ENCODE measurements at regions of chr1 and their contacts with region 1.

Region 1: DNA sequence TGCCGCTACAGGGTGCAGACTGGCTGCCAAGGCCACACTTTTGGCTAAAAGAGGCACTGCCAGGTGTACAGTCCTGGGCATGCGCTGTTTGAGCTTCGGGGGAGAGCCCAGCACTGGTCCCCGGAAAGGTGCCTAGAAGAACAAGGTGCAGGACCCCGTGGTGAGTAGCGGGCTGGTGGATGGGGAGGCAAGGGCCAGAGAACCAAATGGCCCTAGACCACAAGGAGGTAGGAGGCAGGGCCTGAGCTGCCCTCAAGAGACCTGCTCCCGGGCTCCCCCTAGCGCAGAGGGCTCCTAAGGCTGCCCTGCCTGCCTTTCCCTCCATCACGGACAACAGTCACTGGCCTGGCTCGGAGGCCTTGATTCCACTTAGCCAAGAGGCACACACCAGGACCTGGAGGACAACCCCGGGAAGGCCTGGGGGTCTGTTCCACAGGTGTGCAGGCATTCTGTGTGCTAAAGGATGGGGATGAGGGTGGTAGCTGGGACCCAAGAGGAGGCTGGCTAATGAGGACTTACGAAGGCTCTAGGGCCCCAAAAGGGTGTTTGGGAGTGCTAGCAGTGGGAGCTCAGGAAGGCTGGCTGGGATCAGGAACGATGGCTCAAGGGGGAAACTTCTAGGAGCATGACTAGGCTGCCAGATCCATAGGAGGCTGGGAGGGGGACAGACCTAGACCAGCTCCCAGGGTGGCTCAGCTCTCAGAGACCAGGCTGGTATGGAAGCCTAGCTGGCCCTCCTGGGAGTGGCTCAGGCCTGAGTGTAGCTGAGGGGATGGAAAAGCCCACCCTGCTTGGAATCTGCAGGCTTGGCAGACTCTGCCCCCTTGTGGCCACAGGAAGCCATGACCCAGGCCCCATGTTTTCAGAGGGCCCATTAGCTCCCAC is 742 bp downstream of the ARTN start:
- DNase-seq: peak; percentile 51 to 60
- ATAC-seq: peak; percentile 32 to 76; a peak in 4 of 6 replicates
- H3K4me3 ChIP-seq: no peak overlapping the region
- H3K27ac ChIP-seq: peak overlapping the region in 1 of 2 experiments; percentile 92; a peak in 4 of 6 replicates
- H3K4me1 ChIP-seq: peaks cover 54% of the 10 kb centered on the region
- CTCF ChIP-seq: peak; percentile 63
- EP300 ChIP-seq: no peak
- POLR2A ChIP-seq: no peak
- RAD21 ChIP-seq: peak; percentile 74 to 81

Region 2: GRCh38 chr1:43774359-43774758 is 160.0 kb before region 1 on chr1:
- CTCF ChIA-PET with region 1: interaction called, 22 read pairs
- POLR2A ChIA-PET with region 1: no interaction called
- DNase-seq: no peak
- ATAC-seq: peak in 1 of 2 experiments; percentile 52; a peak in 3 of 6 replicates
- H3K4me3 ChIP-seq: no peak overlapping the region
- H3K27ac ChIP-seq: peak overlapping the region; percentile 21 to 56; a peak in 2 of 6 replicates
- H3K4me1 ChIP-seq: peaks cover 31% of the 10 kb centered on the region
- CTCF ChIP-seq: no peak
- EP300 ChIP-seq: no peak
- POLR2A ChIP-seq: no peak
- RAD21 ChIP-seq: no peak

Region 3: DNA sequence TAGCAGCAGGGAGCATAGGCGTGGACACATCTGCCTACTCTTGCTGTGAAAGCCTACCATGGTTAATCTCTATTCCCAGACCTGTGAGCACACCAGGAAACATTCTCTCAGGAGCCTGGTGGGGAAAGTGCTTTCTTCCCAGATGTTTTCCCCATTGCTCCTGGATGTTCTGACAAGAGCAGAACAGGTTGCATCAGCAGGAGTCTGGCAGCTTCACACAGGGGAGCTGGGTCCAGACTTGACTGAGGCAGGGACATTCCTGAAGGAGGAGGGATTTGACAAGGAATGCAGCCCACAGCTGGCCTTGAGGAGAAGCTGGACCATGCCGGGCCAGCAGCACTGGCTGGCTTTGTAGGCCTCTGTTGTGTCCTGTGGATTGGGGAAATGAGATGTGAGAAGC is 21.7 kb before region 1 on chr1:
- CTCF ChIA-PET with region 1: interaction called, 27 read pairs
- POLR2A ChIA-PET with region 1: no interaction called
- DNase-seq: no peak
- ATAC-seq: no peak
- H3K4me3 ChIP-seq: no peak overlapping the region
- H3K27ac ChIP-seq: peak overlapping the region in 1 of 2 experiments; percentile 46; a peak in 3 of 6 replicates
- H3K4me1 ChIP-seq: peaks cover 6% of the 10 kb centered on the region; the same call in 1 of the 3 replicates
- CTCF ChIP-seq: no peak
- EP300 ChIP-seq: no peak
- POLR2A ChIP-seq: no peak
- RAD21 ChIP-seq: no peak

Region 4: DNA sequence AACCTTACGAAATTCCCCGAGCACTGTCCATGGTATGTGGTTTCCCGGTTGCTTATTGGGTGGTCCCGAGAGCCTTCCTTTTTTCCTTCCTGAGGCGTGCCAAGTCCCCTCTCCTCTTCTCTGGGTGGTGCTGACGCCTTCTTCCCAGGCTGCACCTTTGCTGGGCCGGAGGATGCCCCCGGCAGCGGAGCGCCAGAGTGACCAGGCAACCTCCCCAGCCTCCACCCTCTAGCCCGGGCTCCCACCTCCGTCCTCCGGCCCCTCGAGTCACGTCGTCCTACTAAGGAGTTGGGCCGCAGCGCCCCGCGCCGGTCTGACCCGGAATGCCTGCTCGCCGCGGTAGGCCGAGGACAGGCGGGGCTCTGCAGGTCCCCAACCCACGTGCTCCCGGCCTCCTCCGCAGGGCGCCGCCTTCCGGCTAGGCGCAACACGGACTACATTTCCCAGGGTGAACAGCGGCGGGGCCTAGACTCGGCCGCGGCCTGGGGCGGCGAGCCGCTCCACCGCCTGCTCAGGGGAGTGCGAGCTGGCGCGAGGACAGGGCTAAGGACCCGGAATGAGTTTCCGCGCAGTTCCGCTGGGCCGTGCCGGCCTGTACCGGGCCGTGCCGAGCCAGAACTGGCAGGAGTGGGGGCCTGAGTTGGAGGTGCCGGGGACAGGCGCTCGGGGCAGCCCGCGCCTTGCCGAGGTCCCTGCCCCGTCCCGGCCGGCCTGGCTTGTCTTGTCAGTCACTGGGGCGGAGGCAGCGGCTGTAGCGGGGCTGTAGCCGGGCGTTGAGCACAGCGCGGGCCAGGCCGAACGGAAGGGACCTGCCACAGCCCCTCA is 12.1 kb after region 1 on chr1 and contains the start of gene IPO13:
- CTCF ChIA-PET with region 1: interaction called, 34 read pairs
- POLR2A ChIA-PET with region 1: no interaction called
- DNase-seq: peak; percentile 90 to 96
- ATAC-seq: peak; percentile 97 to 98
- H3K4me3 ChIP-seq: peak within 1 kb of the TSS; percentile 68
- H3K27ac ChIP-seq: peak within 1 kb of the TSS; percentile 94 to 97
- H3K4me1 ChIP-seq: peaks cover 13% of the 10 kb centered on the region; the same call in 1 of the 3 replicates
- CTCF ChIP-seq: peak; percentile 55
- EP300 ChIP-seq: no peak
- POLR2A ChIP-seq: peak; percentile 81
- RAD21 ChIP-seq: peak; percentile 58 to 68; a peak in 4 of 5 replicates
- polyA plus RNA-seq, gene IPO13: 8.1 and 12.9 TPM in 2 replicates

Region 5: DNA sequence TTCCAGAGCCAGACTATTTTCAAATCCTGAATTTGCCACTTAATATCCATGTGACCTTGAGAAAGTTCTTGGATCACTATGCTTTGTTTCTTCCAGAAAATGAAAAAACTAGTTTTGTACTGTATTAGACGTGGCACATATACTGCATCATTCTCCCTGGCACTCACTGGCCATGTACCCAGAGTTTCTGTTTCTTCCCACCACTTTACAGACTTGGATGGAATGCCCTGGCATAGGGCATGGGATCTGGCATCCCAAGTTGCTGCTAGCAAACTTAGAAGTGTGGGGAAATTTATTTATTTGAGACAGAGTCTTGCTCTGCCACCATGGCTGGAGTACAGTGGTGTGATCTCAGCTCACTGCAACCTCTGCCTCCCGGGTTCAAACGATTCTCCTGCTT is 197.1 kb after region 1 on chr1:
- CTCF ChIA-PET with region 1: no interaction called
- POLR2A ChIA-PET with region 1: no interaction called
- DNase-seq: no peak
- ATAC-seq: no peak
- H3K4me3 ChIP-seq: no peak overlapping the region
- H3K27ac ChIP-seq: no peak overlapping the region
- H3K4me1 ChIP-seq: no peaks in the 10 kb centered on the region
- CTCF ChIP-seq: no peak
- EP300 ChIP-seq: no peak
- POLR2A ChIP-seq: no peak
- RAD21 ChIP-seq: no peak

Measured in A549 (cell line).